Heart left ventricle (tissue), 16 donors: ENCODE measurements at regions of chr9 and their contacts with region 1.

Region 1: DNA sequence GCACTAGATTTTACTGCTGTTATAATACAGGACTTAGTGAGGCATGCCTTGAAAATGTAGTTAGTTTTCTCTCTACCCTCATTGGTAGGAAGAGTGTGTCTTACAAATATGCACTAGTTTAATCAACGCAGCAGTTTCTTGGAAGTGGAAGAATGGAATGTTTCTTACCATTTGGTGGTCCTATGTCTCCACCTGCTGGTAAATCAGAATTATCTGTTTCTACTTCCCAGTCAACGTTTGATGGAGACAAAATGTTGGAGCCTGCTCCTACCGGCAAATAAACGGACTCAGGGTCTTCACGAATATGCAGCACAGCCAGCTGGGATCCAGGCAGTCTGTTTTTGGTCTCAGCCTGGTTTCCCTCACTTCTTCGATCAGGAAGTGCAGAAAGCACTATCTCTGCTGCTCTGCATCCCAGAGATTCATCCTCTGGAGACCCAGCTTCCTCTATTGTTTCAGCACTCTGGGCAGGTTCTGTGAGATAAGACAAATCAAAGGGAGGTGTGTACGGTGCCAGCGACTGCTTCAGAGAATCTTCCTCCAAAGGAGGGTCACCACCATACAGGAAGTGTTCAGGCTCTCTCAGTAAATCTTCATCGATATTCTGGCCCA is 59.5 kb upstream of the PCA3 start:
- DNase-seq: peak in 1 of 5 donors; percentile 28
- ATAC-seq: peak in 3 of 4 donors; percentile 54 to 59 (median 54)
- H3K4me3 ChIP-seq: no peak overlapping the region
- H3K27ac ChIP-seq: no peak overlapping the region
- H3K4me1 ChIP-seq: peaks cover 0 to 28% (median 0%) of the 10 kb centered on the region in 12 donors
- H3K27me3 ChIP-seq: peaks cover 0 to 38% (median 5%) of the 10 kb centered on the region in 9 donors
- CTCF ChIP-seq: peak; percentile 52 to 75 (median 67)
- POLR2A ChIP-seq: no peak

Region 2: GRCh38 chr9:76403352-76403751 is 301.3 kb before region 1 on chr9:
- intact Hi-C with region 1: loop called in 4 of 10 experiments (anchors 2 to 10 kb)
- DNase-seq: no peak
- ATAC-seq: peak in 3 of 4 donors; percentile 59 to 82 (median 81)
- H3K4me3 ChIP-seq: peak overlapping the region in 2 of 12 donors; percentile 12 to 32
- H3K27ac ChIP-seq: peak overlapping the region in 6 of 12 donors; percentile 2 to 77 (median 38)
- H3K4me1 ChIP-seq: peaks cover 0 to 9% (median 0%) of the 10 kb centered on the region in 12 donors
- H3K27me3 ChIP-seq: no peaks in the 10 kb centered on the region
- CTCF ChIP-seq: peak; percentile 35 to 66 (median 52)
- POLR2A ChIP-seq: no peak

Region 3: GRCh38 chr9:76445976-76446375 is 258.7 kb before region 1 on chr9:
- intact Hi-C with region 1: loop called (anchors 1 to 5 kb)
- DNase-seq: no peak
- ATAC-seq: no peak
- H3K4me3 ChIP-seq: no peak overlapping the region
- H3K27ac ChIP-seq: no peak overlapping the region
- H3K4me1 ChIP-seq: peaks cover 0 to 4% (median 0%) of the 10 kb centered on the region in 12 donors
- H3K27me3 ChIP-seq: no peaks in the 10 kb centered on the region
- CTCF ChIP-seq: no peak
- POLR2A ChIP-seq: no peak

Region 4: DNA sequence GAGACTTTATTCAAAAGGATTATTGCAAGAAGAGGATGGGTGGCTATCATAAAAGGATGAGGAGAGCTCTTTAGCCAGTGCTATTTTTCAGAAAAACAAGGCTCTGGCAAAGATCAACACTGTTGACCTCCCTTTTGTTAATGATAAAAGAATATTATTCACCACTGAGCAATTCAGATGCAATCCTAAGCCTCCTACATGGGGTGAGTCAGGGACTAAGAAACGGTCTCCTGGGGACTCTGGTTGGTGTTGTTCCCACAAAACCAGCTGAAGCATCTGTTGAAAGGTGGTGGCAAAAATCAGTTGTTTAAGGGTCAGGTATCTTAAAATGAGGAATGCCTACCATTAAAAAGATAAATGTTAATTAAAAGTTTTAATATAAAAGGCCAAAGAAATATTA is 253.5 kb before region 1 on chr9:
- intact Hi-C with region 1: loop called (anchors 1 to 5 kb)
- DNase-seq: peak in 1 of 5 donors; percentile 30
- ATAC-seq: peak in 2 of 4 donors; percentile 41 to 85
- H3K4me3 ChIP-seq: no peak overlapping the region
- H3K27ac ChIP-seq: no peak overlapping the region
- H3K4me1 ChIP-seq: peaks cover 0 to 4% (median 0%) of the 10 kb centered on the region in 12 donors
- H3K27me3 ChIP-seq: no peaks in the 10 kb centered on the region
- CTCF ChIP-seq: no peak
- POLR2A ChIP-seq: no peak

Region 5: GRCh38 chr9:76667521-76667957 is 37.2 kb before region 1 on chr9:
- intact Hi-C with region 1: loop called in 6 of 10 experiments (anchors 5 kb)
- DNase-seq: no peak
- ATAC-seq: peak in 1 of 4 donors; percentile 63
- H3K4me3 ChIP-seq: no peak overlapping the region
- H3K27ac ChIP-seq: no peak overlapping the region
- H3K4me1 ChIP-seq: peaks cover 0 to 9% (median 0%) of the 10 kb centered on the region in 12 donors
- H3K27me3 ChIP-seq: no peaks in the 10 kb centered on the region
- CTCF ChIP-seq: no peak
- POLR2A ChIP-seq: no peak